GM23248 (cell line): ENCODE measurements at regions of chr19 and their contacts with region 1.

Region 1: DNA sequence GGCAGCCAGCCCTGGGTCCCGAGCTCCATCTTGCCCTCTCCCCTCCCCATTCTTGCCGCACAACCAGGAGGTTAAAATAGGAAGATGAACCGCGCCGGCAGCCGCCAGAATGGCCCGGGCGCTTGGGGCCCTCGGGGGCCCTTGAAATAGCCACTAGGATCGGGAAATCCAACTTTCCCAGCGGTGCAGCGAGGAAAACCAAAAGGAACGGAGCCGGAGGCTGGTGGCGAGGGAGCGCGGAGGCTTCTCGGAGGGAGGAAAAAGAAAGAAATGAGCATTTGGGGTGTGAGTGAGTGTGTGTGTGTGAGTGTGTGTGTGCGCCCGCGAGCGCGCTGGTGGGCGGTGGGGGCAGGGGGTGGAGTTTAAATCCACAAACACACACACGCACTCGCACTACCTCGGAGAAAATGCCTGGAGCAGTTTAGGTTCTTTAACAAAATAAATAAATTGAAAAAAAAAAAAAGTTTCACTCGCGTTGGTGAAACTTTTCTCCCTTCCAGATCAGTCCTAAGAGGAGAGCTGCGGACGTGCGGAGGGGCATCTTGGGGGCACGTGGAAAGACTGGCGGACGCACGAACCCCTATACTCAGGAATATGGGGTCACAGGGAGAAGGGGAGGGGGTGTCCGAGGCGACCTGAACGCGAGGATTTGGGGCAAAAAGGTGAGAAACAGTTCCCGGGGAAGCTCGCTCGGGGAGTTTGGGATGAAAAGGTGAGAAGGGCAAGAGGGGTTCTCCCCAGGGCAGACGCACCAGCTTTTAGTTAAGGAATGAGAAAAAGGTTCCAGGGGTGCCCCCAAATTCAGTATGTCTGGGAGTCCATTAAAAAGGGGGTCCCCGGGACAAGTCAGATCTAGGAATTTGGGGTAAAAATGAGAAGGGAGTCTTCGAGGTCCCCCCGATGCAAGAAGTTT is 1.3 kb downstream of the RFX2 start:
- DNase-seq: peak; percentile 83
- H3K4me3 ChIP-seq: peak overlapping the region; percentile 85
- H3K27ac ChIP-seq: peak overlapping the region; percentile 88
- H3K4me1 ChIP-seq: peaks cover 27% of the 10 kb centered on the region
- H3K27me3 ChIP-seq: no peaks in the 10 kb centered on the region

Region 2: DNA sequence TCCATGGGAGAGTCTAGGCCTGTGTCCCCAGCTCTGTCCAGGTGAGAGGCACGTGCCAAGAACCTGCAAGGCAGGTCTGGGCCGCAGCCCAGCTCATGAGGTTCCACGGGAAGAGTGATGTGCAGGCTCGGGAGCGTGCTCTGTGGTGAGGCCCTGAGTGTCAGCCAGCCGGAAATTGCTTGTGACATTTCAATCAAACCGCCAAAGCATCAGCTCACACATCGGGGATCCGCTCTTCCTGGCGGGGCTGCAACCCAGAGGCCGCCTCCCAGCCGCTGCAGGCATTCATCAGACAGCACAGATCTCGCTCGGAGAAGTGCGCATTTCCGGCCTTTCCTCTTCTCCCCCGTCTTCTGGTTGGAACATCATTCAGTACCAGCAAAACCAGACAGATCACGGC is 1030.8 kb before region 1 on chr19:
- in situ Hi-C with region 1: no loop called
- DNase-seq: no peak
- H3K4me3 ChIP-seq: no peak overlapping the region
- H3K27ac ChIP-seq: no peak overlapping the region
- H3K4me1 ChIP-seq: no peaks in the 10 kb centered on the region
- H3K27me3 ChIP-seq: no peaks in the 10 kb centered on the region

Region 3: GRCh38 chr19:6056801-6057650 is 52.0 kb before region 1 on chr19:
- in situ Hi-C with region 1: loop called (anchors 10 kb)
- DNase-seq: peak; percentile 98
- H3K4me3 ChIP-seq: peak overlapping the region; percentile 54
- H3K27ac ChIP-seq: peak overlapping the region; percentile 98
- H3K4me1 ChIP-seq: peaks cover 28% of the 10 kb centered on the region
- H3K27me3 ChIP-seq: no peaks in the 10 kb centered on the region

Region 4: DNA sequence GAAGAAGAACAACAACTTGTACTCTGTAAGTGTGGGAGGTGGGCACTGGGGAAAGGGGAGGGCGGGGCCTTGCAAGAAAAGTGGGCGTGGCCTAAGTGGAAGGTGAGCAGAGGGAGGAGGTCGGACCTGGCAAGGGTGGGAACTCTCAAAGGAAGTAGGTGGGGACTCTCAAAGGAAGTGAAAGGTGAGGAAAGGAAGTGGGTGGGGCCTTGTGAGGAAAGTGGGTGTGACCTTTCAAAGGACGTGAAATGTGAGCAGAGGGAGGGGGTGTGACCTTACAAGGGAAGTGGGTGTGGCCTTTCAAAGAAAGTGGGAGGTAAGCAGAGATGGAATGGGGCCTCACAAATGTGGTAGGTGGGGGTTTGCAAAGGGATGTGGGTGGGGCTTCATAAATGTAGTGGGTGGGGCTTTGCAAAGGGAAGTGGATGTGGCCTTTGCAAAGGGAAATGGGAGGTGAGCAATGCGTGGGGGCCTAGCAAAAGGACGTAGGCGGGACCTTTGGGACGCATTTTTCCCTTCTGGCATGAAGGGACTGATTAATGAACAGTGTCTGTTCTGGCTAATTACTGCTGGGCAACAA is 52.4 kb after region 1 on chr19:
- in situ Hi-C with region 1: no loop called
- DNase-seq: peak; percentile 14
- H3K4me3 ChIP-seq: no peak overlapping the region
- H3K27ac ChIP-seq: no peak overlapping the region
- H3K4me1 ChIP-seq: no peaks in the 10 kb centered on the region
- H3K27me3 ChIP-seq: no peaks in the 10 kb centered on the region

Region 5: DNA sequence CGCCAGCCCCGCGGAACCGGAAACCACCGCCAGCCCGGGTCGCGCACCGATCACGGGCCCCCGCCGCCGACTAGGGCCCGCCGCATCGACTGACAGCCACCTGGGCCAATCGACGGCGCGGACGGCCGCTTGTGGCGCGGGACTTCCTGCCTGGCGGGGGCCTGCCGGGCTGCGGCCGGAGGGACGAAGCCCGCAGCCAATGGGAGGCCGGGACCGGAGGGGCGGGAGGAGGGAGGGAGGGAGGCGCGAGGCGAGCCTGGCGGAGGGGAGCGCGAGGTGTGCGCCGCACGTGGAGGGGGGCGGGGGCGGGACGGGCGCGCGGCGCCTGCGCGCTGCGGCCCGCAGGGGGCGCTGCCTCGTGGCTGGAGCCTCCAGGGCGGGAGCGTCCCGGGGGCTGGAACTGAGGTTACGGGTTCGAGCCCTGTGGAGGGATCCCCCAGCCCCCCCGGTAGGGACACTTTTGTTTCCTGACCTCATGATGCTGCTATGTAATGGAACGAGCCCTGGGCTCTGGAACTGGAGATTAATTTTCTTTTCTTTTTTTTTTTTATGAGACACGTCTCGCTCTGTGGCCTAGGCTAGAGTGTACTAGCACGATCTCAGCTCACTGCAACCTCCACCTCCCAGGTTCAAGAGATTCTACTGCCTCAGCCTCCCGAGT is 171.1 kb after region 1 on chr19 and contains the start of gene MLLT1:
- in situ Hi-C with region 1: no loop called
- DNase-seq: peak; percentile 99
- H3K4me3 ChIP-seq: peak within 1 kb of the TSS; percentile 94
- H3K27ac ChIP-seq: peak within 1 kb of the TSS; percentile 72
- H3K4me1 ChIP-seq: peaks cover 34% of the 10 kb centered on the region
- H3K27me3 ChIP-seq: no peaks in the 10 kb centered on the region
- total RNA-seq, gene MLLT1: 17.3 and 19.1 TPM in 2 replicates

Region 6: DNA sequence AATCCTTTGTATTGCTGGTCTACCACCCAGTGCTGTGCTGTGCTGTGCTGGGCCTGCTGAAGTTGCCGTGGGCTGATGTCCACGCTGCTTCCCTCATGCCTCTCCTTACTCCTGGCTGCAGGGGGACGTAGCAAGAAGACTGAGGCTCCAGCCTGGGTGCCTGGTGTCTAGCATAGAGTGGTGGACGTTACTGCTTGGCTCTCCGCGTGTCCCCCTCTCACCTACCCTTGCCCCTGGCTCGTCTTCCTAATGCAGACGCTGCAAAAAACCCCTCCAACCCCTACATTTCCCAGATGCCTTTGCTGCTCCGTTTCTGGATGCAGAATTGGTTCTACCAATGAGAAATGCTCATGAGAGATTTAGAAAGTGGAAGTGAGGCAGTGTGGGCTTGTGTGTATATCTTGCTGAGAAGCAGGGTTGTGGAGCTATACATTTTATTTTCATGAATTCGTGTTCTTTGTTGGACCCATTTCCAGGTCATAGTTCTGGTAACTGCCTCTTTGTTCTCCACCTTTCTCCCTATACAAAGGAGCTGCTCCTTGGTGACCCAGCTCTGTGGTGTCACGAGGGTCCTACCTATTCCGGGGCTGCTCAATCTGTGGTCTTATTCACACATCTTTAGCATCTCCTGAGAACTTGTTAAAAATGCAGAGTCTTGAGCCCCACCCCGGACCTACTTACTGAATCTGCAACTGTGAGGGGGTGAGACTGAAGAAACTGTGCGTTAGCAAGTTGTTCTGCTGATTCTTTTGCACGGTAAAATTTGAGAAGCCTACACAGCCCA is 380.5 kb after region 1 on chr19:
- in situ Hi-C with region 1: no loop called
- DNase-seq: no peak
- H3K4me3 ChIP-seq: no peak overlapping the region
- H3K27ac ChIP-seq: no peak overlapping the region
- H3K4me1 ChIP-seq: no peaks in the 10 kb centered on the region
- H3K27me3 ChIP-seq: peaks cover 7% of the 10 kb centered on the region; the same call in 1 of the 2 replicates